CD8-positive, alpha-beta T cell (primary cell): ENCODE measurements at regions of chr2 and their contacts with region 1.

Region 1: DNA sequence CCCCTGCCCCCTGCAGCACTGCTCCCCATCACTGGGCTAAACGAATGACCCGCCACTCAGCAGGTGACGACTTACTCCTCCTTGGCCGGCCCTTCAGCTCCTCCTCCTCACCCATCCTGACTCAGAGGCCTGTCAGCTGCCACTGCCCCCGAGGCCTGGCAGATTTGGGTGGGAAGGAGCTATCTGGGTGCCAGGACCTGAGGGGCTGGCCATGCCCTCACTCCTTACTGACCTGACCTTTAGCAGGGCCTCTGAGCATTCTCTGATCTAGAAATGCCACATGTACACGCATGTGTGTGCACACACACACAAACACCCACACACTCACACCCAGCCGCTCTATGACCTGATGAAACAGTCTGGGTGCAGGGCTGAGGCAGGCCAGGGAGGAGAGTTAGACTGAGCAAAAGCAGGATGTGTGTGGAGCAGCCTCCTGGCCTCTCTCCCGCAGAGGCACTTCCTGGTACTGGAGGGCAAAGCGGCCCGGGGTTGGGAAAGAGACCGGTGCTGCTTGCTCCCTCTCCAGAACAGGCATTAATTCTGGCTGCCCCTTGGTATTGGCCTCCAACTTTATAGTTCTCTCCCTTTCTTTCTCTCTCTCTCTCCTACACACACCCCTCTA is 68.0 kb downstream of the ZFP36L2 start:
- DNase-seq: peak in 5 of 9 experiments; percentile 53 to 81 (median 64)
- ATAC-seq: peak; percentile 48
- H3K4me3 ChIP-seq: peak overlapping the region; percentile 9 to 16
- H3K4me3 Mint-ChIP-seq: peak overlapping the region; percentile 75
- H3K27ac ChIP-seq: peak overlapping the region; percentile 60 to 90
- H3K27ac Mint-ChIP-seq: peak overlapping the region; percentile 96
- H3K4me1 ChIP-seq: peaks cover 88% of the 10 kb centered on the region
- H3K4me1 Mint-ChIP-seq: peaks cover 85% of the 10 kb centered on the region
- H3K27me3 ChIP-seq: no peaks in the 10 kb centered on the region
- H3K27me3 Mint-ChIP-seq: no peaks in the 10 kb centered on the region
- CTCF ChIP-seq: no peak

Region 2: DNA sequence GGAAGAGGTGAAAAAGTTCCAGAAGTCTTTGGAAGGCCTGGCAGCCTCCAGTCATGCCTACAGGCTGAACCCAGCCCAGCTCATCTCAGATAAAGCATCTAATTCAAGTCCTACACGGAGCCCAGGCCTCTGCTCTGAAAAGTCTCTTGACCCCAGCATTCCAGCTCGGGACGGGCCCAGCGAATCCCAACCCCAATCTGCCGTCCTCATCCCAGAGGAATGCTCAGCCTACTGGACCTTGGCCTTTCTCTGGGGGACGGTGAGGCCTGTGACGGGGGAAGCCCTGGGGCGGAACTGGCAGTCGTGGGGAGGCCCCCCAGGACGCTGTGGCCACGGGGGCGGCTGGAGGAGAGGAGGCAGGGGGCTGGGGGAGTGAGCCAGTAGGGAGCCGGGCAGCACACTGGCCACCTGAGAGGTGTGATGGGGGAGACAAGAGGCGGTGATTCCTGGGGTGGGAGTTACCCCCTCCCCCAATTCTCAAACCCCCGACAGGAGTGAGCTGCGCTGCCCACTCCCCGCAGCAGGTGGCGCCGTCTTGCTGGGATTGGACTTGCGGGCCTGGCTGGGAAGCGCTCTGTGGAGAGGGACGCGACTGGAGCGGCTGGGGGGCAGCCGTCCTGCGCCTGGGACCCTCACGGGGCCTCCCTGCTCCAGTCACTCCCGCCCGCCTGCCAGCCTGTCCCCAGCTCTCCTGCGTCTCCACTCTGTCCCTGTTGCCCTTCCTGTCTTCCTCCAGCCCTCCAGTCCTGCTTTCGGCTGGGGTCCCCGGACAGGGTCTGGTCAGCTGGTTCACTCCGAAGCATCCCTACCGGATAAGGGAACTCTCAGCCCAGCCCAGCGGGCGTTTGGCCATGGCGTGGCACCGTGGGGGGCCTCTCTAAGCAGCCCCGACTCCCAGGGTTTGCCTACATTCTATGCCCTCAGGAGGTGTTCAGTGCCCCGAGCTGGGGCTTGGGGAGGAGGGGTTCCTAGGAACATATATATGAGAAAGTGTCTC is 183.4 kb before region 1 on chr2:
- CTCF ChIA-PET with region 1: interaction called, 3 read pairs
- POLR2A ChIA-PET with region 1: no interaction called
- intact Hi-C with region 1: loop called in 1 of 2 experiments (anchors 5 kb)
- DNase-seq: peak; percentile 27 to 79 (median 60)
- ATAC-seq: peak; percentile 78
- H3K4me3 ChIP-seq: no peak overlapping the region
- H3K4me3 Mint-ChIP-seq: no peak overlapping the region
- H3K27ac ChIP-seq: no peak overlapping the region
- H3K27ac Mint-ChIP-seq: no peak overlapping the region
- H3K4me1 ChIP-seq: peaks cover 8% of the 10 kb centered on the region
- H3K4me1 Mint-ChIP-seq: peaks cover 15% of the 10 kb centered on the region
- H3K27me3 ChIP-seq: no peaks in the 10 kb centered on the region
- H3K27me3 Mint-ChIP-seq: no peaks in the 10 kb centered on the region
- CTCF ChIP-seq: peak; percentile 71

Region 3: GRCh38 chr2:43142921-43143438 is 15.4 kb before region 1 on chr2:
- CTCF ChIA-PET with region 1: interaction called, 4 read pairs
- POLR2A ChIA-PET with region 1: interaction called, 5 read pairs
- intact Hi-C with region 1: loop called in 1 of 2 experiments (anchors 1 kb)
- DNase-seq: peak in 7 of 9 experiments; percentile 24 to 74 (median 51)
- ATAC-seq: peak; percentile 41
- H3K4me3 ChIP-seq: peak overlapping the region; percentile 37 to 53
- H3K4me3 Mint-ChIP-seq: peak overlapping the region; percentile 66
- H3K27ac ChIP-seq: peak overlapping the region; percentile 40 to 49
- H3K27ac Mint-ChIP-seq: peak overlapping the region; percentile 92
- H3K4me1 ChIP-seq: peaks cover 76% of the 10 kb centered on the region
- H3K4me1 Mint-ChIP-seq: peaks cover 70% of the 10 kb centered on the region
- H3K27me3 ChIP-seq: no peaks in the 10 kb centered on the region
- H3K27me3 Mint-ChIP-seq: no peaks in the 10 kb centered on the region
- CTCF ChIP-seq: no peak

Region 4: DNA sequence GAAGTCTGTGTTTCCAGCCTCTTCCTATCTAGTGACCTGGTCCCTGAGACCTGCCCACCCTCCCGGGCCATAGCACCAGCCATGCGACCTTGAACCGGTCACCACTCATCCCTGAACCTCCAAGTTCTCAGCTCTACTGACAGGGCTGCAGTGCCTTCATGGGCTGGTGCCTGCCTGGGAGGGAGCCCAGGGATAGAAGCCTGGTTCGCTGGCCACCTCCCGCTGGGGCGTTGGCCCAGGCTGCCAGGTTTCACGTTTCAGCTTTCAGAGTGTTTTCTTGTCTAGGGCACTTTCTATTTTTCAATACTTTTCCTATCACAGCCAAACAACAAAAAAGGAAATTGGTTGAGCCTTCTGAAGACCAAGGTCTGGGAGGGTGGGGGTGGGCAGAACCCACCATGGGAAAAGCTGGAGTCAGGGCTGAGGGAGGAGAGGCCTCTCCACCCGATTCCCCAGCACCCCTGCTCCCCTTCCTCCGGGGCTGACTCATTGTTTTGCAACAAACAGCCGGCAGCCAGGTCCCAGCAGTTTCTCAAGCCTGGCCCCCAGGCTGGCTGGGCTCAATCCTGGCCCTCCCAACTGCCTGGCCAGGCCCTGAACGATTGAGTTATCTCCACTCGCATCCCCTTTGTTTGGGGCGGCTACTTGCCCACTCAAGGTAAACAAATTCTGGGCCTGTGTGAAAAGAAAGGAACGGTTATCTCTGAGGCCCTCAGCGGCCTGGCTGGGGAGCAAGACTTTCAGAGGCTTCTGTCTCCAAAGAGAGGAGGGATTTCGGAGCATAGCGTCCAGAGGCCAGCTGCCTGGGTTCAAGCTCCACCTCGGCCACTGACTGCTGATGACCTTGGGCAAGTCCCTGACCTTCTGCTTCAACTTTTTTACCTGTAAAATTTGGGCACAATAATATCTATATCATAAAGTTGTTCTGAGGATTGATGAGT is 20.5 kb after region 1 on chr2:
- CTCF ChIA-PET with region 1: interaction called, 41 read pairs
- POLR2A ChIA-PET with region 1: interaction called, 6 read pairs
- intact Hi-C with region 1: loop called in 1 of 2 experiments (anchors 1 kb)
- DNase-seq: peak in 2 of 9 experiments; percentile 45 to 63
- ATAC-seq: no peak
- H3K4me3 ChIP-seq: no peak overlapping the region
- H3K4me3 Mint-ChIP-seq: peak overlapping the region; percentile 45
- H3K27ac ChIP-seq: peak overlapping the region in 1 of 2 experiments; percentile 17
- H3K27ac Mint-ChIP-seq: peak overlapping the region; percentile 90
- H3K4me1 ChIP-seq: peaks cover 57% of the 10 kb centered on the region
- H3K4me1 Mint-ChIP-seq: peaks cover 66% of the 10 kb centered on the region
- H3K27me3 ChIP-seq: no peaks in the 10 kb centered on the region
- H3K27me3 Mint-ChIP-seq: no peaks in the 10 kb centered on the region
- CTCF ChIP-seq: no peak

Region 5: DNA sequence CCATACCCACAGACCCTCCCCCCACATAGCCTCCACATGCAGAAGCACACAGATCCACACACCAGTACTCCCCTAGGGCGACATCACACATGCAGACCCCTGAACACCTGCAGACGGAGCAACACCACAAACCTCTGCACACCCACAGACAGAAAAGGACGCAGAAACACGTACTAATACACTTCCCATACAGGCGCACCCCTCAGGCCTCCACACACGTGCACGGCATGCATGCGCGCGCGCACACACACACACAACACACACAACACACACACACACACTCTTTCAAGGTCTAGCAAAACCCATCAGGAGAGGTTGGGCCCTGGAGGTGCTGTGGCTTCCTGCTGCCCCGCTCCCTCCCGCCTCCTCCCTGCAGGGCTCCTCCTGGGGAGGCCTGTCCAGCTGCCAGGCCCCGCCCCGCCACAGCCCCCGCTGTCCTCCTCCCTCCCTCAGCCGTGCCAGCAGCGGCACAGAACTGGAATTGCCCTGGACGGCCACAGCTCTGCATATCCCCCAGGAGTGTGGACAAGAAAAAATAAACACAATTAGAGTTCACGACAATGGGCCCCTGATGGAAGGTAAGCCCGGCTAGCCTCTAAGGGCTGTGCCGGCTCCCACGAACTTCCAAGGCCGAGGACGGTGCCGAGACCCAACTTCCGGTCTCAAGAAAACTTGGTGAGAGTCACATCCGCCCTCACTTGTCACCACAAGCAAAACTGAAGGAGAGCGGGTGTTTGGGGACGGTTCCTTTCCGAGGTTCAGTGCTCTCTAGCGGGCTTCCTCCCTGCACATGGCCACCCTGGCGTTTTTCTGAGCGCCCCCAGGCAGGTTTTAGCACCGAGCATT is 61.2 kb after region 1 on chr2:
- CTCF ChIA-PET with region 1: interaction called, 537 read pairs
- POLR2A ChIA-PET with region 1: interaction called, 828 read pairs
- intact Hi-C with region 1: loop called in 1 of 2 experiments (anchors 1 kb)
- DNase-seq: peak; percentile 59 to 95 (median 82)
- ATAC-seq: peak; percentile 41
- H3K4me3 ChIP-seq: peak overlapping the region; percentile 89 to 94
- H3K4me3 Mint-ChIP-seq: peak overlapping the region; percentile 94
- H3K27ac ChIP-seq: peak overlapping the region; percentile 76 to 86
- H3K27ac Mint-ChIP-seq: peak overlapping the region; percentile 99
- H3K4me1 ChIP-seq: peaks cover 33% of the 10 kb centered on the region
- H3K4me1 Mint-ChIP-seq: peaks cover 49% of the 10 kb centered on the region
- H3K27me3 ChIP-seq: no peaks in the 10 kb centered on the region
- H3K27me3 Mint-ChIP-seq: no peaks in the 10 kb centered on the region
- CTCF ChIP-seq: no peak